Activated CD8-positive, alpha-beta T cell treated with anti-CD3 and anti-CD28 coated beads for 36 hours (primary cell): ENCODE measurements at regions of chr17 and their contacts with region 1.

Region 1: DNA sequence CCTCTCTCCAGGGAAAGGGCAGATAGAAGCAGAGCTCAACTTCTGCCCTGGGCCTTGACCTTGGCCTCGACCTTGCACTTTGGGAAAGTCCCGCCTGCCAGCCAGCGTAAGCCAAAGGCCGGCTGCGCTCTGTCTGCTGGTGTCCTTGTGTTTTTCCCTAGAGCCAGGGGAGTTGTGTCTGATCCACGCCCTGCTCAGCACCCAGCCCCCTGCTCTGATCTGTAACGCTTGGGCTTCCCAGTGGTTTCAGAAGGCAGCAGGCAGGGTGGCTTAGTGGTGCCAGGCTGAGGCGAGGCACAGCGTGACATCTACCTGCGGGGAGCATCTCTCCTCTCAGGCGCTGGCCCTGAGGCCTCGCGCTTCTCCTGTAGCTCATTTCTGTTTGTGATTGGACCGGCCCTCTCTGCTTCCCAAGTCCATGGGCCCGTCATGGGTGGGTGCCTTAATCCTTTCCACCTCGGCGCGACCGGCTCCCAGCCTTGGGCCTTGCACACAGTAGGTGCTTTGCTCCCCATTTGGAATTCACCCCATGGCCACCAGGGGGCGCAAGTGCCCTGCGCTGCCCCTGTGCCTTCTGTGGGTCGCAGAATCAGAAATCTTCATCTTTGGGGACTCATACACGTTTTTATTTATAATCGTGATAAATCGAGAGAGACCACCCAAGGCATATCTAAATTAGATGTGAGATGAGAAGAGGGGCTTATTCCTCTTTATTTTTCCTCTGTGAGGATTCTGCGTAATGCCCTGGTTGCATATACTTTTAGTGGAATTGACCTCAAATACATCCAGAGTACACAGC is 24.2 kb downstream of the SGSH start:
- DNase-seq: peak; percentile 53
- ATAC-seq: peak; percentile 47
- H3K4me3 Mint-ChIP-seq: no peak overlapping the region
- H3K27ac Mint-ChIP-seq: no peak overlapping the region
- H3K4me1 Mint-ChIP-seq: no peaks in the 10 kb centered on the region
- H3K27me3 Mint-ChIP-seq: peaks cover 6% of the 10 kb centered on the region
- CTCF ChIP-seq: peak; percentile 99

Region 2: DNA sequence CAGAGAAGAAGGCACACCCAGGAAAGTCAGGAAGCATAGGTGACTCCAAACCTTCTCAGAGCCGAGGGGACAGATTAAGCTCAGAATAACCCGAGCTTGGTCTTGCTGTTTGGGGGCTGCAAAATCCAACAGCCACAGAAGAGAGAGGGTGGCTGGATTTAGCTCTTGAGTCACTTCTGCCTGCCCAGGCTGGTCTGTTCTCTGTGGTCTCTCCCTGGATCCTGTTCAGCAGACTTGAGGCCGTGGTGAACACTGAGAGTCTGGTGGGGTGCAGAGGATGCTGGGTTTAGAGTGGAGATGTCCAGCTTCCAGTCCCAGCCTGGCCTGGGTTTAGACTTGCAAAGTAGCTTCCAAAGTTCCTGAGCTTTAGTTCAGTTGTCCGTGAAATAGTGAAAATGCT is 33.1 kb after region 1 on chr17:
- CTCF ChIA-PET with region 1: interaction called, 10 read pairs
- POLR2A ChIA-PET with region 1: no interaction called
- intact Hi-C with region 1: no loop called
- DNase-seq: no peak
- ATAC-seq: no peak
- H3K4me3 Mint-ChIP-seq: no peak overlapping the region
- H3K27ac Mint-ChIP-seq: no peak overlapping the region
- H3K4me1 Mint-ChIP-seq: peaks cover 3% of the 10 kb centered on the region
- H3K27me3 Mint-ChIP-seq: no peaks in the 10 kb centered on the region
- CTCF ChIP-seq: no peak

Region 3: DNA sequence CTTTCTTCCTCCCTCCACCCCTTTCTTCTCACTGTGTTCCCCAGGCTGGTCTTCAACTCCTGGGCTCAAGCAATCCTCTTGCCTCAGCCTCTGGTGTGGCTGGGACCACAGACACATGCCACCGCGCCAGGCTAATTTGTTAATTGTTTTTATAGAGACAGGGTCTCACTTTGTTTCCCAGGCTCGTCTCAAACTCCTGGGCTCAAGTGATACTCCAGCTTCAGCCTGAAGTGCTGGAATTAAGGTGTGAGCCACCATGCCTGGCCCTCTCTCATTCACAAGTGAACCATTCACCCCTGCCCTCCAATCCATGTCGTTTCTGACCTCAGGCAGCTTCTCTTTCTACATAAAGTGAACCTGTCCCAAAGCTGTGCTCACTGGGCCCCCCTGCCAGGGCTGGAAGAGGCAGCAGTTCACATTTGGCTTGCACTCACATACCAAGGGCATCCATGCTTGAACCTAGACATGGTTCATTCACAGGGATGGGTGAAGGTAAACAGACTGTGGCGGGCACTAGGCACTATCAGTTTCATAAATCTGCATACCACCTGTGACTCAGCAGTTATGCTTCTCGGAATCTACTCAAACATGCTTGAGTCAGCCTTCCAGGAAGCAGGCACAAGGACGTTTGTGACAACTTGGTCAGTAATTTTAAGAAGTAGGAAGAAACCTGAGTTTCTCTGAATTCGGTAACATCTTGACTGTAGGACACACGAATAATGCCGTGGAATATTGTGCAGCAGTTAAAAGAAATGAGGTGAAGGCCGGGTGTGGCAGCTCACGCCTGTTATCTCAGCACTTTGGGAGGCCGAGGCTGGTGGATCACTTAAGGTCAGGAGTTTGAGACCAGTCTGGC is 58.7 kb after region 1 on chr17:
- CTCF ChIA-PET with region 1: interaction called, 28 read pairs
- POLR2A ChIA-PET with region 1: no interaction called
- intact Hi-C with region 1: loop called (anchors 2 kb)
- DNase-seq: peak; percentile 85
- ATAC-seq: peak; percentile 67
- H3K4me3 Mint-ChIP-seq: no peak overlapping the region
- H3K27ac Mint-ChIP-seq: peak overlapping the region; percentile 80
- H3K4me1 Mint-ChIP-seq: peaks cover 52% of the 10 kb centered on the region
- H3K27me3 Mint-ChIP-seq: no peaks in the 10 kb centered on the region
- CTCF ChIP-seq: no peak

Region 4: GRCh38 chr17:80337195-80337895 is 141.4 kb after region 1 on chr17:
- CTCF ChIA-PET with region 1: no interaction called
- POLR2A ChIA-PET with region 1: no interaction called
- intact Hi-C with region 1: no loop called
- DNase-seq: no peak
- ATAC-seq: no peak
- H3K4me3 Mint-ChIP-seq: no peak overlapping the region
- H3K27ac Mint-ChIP-seq: peak overlapping the region; percentile 2
- H3K4me1 Mint-ChIP-seq: no peaks in the 10 kb centered on the region
- H3K27me3 Mint-ChIP-seq: no peaks in the 10 kb centered on the region
- CTCF ChIP-seq: no peak